Sigmoid colon (tissue), 7 donors: ENCODE measurements at regions of chr17 and their contacts with region 1.

Region 1: GRCh38 chr17:20926532-20926931 is 116.3 kb downstream of the USP22 start:
- DNase-seq: no peak
- H3K4me3 ChIP-seq: no peak overlapping the region
- H3K27ac ChIP-seq: no peak overlapping the region
- H3K4me1 ChIP-seq: peaks cover 0 to 52% (median 18%) of the 10 kb centered on the region in 4 donors
- H3K27me3 ChIP-seq: no peaks in the 10 kb centered on the region
- CTCF ChIP-seq: no peak
- EP300 ChIP-seq: no peak
- POLR2A ChIP-seq: no peak

Region 2: DNA sequence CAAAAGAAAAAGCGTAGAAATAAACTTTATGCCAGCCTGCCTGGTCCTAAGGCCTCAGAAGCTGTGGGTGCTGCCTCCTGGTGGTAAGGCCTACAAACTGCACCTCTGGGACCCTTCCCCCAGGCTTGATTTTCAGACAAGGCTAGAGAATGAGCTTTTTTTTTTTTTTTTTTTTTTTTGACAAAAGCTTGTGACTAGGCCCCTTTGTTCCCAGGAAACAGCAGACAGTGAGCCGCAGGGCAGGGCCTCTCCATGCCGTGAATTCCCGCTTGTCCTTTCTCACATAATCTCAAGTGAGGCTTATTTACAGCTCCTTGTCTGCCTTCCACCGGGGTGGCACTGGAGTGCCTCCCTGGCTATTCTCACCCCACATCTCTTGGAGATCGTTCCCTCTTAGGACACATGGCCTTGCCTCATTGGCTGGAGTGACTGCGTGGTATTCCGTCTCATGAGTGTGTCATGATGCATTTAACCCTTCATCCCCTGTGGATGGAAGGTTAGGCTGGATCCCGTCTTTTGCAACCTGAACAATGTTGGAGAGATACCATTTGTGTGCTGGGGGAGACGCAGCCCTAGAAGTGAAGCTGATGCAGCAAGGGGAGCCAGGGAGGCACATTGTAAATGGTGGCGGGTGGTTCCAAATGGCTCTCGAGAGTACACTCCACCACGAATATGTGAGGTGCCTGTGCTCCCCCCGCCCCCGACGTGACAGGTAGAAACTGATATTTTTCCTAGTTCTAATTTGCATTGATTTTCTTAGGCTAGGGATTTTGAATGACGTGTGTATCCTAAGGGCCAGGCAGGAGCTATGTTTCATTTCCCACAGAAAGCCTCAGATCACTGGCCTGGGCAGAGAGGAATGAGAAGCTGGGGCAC is 66.7 kb after region 1 on chr17:
- intact Hi-C with region 1: loop called (anchors 5 kb)
- DNase-seq: peak; percentile 84
- H3K4me3 ChIP-seq: peak overlapping the region in 3 of 4 donors; percentile 32 to 37 (median 34)
- H3K27ac ChIP-seq: peak overlapping the region in 3 of 4 donors; percentile 43 to 58 (median 57)
- H3K4me1 ChIP-seq: peaks cover 0 to 36% (median 21%) of the 10 kb centered on the region in 4 donors
- H3K27me3 ChIP-seq: no peaks in the 10 kb centered on the region
- CTCF ChIP-seq: peak; percentile 72 to 94 (median 89)
- EP300 ChIP-seq: no peak
- POLR2A ChIP-seq: no peak